Heart left ventricle (tissue), 16 donors: ENCODE measurements at regions of chr5 and their contacts with region 1.

Region 1: GRCh38 chr5:88690409-88691229 is 192.4 kb downstream of the MEF2C start:
- DNase-seq: peak; percentile 54 to 78 (median 63)
- ATAC-seq: peak; percentile 79 to 93 (median 88)
- H3K4me3 ChIP-seq: peak overlapping the region in 9 of 12 donors; percentile 8 to 38 (median 31)
- H3K27ac ChIP-seq: no peak overlapping the region
- H3K4me1 ChIP-seq: peaks cover 0 to 37% (median 18%) of the 10 kb centered on the region in 12 donors
- H3K27me3 ChIP-seq: peaks cover 70 to 100% (median 98%) of the 10 kb centered on the region in 9 donors
- CTCF ChIP-seq: peak; percentile 88 to 98 (median 96)
- POLR2A ChIP-seq: no peak

Region 2: DNA sequence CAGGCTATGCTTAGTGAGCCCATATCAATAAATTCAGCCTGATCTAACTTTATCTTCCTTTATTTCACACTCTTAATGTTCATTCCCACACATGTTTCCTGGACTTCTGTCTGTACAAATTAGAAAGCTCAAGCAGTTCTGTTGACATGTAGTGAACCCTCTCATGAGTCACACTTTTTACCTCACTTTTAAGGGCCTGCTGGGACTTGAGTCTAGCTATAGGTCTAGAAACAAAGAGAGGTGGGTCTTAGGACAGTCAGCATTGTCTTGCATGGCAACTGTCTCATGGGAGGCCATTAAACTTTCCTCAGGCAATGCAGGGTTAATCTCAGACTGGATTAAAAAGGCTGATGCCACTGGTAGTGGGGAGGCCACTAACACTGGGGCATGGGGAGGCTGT is 1269.3 kb before region 1 on chr5:
- intact Hi-C with region 1: loop called in 2 of 10 experiments (anchors 10 kb)
- DNase-seq: no peak
- ATAC-seq: no peak
- H3K4me3 ChIP-seq: no peak overlapping the region
- H3K27ac ChIP-seq: no peak overlapping the region
- H3K4me1 ChIP-seq: no peaks in the 10 kb centered on the region
- H3K27me3 ChIP-seq: no peaks in the 10 kb centered on the region
- CTCF ChIP-seq: no peak
- POLR2A ChIP-seq: no peak

Region 3: DNA sequence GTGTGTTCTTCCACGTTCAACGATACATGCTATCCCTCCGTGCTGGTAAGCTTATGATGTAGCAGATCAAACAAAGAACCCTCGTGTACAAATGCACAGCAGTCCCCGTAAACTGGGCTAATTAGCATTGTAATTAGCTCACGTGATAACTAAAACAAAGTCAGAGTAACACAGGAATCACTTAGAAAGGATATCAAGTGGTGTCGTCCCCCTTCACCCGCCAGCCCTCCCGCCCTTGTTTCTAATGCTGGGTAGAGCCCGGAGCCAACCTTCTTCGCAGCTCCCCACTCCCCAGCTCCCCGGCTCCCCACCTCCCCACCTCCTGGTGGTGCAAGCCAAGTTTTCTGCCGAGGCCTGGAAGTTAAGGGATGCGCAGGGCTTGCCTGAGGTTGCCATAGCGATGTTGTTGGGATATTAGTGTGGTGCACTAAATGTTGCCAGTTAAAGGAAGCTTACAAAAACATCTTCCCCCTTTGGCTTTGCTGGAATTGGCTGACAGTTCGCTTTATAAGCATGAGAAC is 920.0 kb before region 1 on chr5:
- intact Hi-C with region 1: loop called in 1 of 10 experiments (anchors 5 kb)
- DNase-seq: no peak
- ATAC-seq: no peak
- H3K4me3 ChIP-seq: no peak overlapping the region
- H3K27ac ChIP-seq: no peak overlapping the region
- H3K4me1 ChIP-seq: no peaks in the 10 kb centered on the region
- H3K27me3 ChIP-seq: peaks cover 0 to 63% (median 12%) of the 10 kb centered on the region in 9 donors
- CTCF ChIP-seq: no peak
- POLR2A ChIP-seq: no peak

Region 4: DNA sequence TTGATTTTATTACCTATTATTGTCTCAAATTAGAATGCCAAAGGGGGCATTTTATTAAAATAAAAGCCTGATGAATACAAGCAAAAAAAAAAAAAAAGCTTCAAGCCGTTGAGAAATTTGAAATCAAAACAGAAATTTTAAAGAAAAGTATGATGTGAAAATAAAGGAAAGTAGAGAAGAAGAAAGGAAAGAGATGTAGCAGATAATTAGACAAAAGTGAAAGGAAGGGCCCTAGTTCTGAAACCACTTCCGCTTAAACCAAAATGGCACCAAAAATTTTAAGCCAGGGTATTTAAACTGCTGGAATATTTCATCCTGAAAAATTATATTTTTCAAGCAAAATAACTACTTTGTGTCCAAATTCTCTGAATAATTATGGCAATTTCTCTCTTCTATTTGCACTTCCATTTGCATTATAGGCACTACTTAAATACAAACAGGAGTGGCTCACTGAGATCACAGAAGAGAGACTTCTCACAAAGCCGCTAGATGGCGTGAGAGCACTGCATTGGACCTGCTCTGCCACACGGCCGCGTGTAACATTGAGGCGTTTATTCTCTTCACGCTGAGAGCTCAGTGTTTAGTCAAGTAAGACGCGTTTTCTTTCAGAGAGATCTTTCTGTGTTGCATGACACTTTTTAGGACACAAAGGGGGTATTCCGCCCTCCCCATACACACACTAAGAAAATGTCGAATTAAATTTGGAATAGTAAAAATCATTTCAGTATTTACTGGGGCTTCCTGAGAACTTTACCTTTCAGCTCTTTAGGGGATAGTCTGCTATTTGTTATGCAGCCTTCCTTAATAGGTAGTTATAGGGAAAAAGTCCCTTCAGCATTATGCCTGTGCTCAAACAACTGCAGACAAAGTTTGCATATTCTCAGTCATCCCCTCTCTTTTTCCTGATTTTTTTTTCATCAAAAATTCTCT is 909.5 kb before region 1 on chr5:
- intact Hi-C with region 1: loop called in 8 of 10 experiments (anchors 1 to 5 kb)
- DNase-seq: peak; percentile 76 to 80 (median 76)
- ATAC-seq: peak; percentile 91 to 98 (median 96)
- H3K4me3 ChIP-seq: no peak overlapping the region
- H3K27ac ChIP-seq: no peak overlapping the region
- H3K4me1 ChIP-seq: no peaks in the 10 kb centered on the region
- H3K27me3 ChIP-seq: peaks cover 0 to 78% (median 36%) of the 10 kb centered on the region in 9 donors
- CTCF ChIP-seq: peak; percentile 83 to 97 (median 92)
- POLR2A ChIP-seq: no peak

Region 5: DNA sequence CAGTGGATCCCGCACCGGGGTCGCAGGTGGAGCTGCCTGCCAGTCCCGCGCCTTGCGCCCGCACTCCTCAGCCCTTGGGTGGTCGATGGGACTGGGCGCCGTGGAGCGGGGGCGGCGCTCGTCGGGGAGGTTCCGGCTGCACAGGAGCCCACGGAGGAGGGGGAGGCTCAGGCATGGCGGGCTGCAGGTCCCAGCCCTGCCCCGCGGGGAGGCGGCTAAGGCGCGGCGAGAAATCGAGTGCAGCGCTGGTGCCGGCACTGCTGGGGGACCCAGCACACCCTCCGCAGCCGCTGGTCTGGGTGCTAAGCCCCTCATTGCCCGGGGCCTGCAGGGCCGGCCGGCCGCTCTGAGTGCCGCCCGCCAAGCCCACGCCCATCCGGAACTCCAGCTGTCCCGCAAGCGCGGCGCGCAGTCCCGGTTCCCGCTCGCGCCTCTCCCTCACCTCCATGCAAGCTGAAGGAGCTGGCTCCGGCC is 313.0 kb after region 1 on chr5:
- intact Hi-C with region 1: no loop called
- DNase-seq: peak in 1 of 5 donors; percentile 54
- ATAC-seq: no peak
- H3K4me3 ChIP-seq: no peak overlapping the region
- H3K27ac ChIP-seq: no peak overlapping the region
- H3K4me1 ChIP-seq: no peaks in the 10 kb centered on the region
- H3K27me3 ChIP-seq: no peaks in the 10 kb centered on the region
- CTCF ChIP-seq: no peak
- POLR2A ChIP-seq: no peak